Prostate gland (tissue), 2 donors: ENCODE measurements at regions of chr3 and their contacts with region 1.

Region 1: GRCh38 chr3:138329127-138329983 is at the start of gene NME9:
- DNase-seq: peak; percentile 86
- H3K4me3 ChIP-seq: peak within 1 kb of the TSS; percentile 45 to 56
- H3K27ac ChIP-seq: peak within 1 kb of the TSS; percentile 64 to 78
- H3K4me1 ChIP-seq: no peaks in the 10 kb centered on the region
- H3K27me3 ChIP-seq: no peaks in the 10 kb centered on the region
- CTCF ChIP-seq: peak in 3 of 4 experiments; percentile 42 to 57 (median 50)
- POLR2A ChIP-seq: peak; percentile 39
- total RNA-seq, gene NME9: 3.2 TPM in 1 of 2 donors, not detected in the other

Region 2: DNA sequence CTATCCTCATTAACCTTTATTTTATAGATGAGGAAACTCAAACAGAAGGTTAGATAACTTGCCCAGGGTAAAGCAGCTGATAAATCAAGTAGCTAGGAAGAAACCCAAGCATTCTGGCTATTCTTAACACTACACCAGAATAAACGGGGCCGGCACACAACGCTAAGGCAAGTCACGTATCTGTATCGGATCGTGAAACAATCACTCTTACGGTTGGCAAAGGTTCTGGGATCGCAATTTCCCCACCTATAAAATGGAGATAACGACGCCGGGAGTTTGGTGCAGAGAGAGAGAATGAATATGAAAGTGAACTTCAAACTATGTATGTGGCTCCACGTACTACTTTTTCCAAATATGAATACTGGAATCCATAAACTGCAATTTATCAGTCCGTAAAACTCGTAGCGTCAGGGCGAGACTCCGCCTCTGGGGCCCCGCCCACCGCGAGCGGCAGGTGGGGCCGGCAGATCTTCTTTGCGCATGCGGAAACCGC is 142.5 kb before region 1 on chr3:
- intact Hi-C with region 1: loop called (anchors 5 kb)
- DNase-seq: peak; percentile 88
- H3K4me3 ChIP-seq: peak overlapping the region; percentile 72 to 98
- H3K27ac ChIP-seq: peak overlapping the region; percentile 89 to 96
- H3K4me1 ChIP-seq: no peaks in the 10 kb centered on the region
- H3K27me3 ChIP-seq: no peaks in the 10 kb centered on the region
- CTCF ChIP-seq: no peak
- POLR2A ChIP-seq: no peak

Region 3: GRCh38 chr3:138424323-138424722 is 95.0 kb after region 1 on chr3:
- intact Hi-C with region 1: loop called (anchors 5 kb)
- DNase-seq: no peak
- H3K4me3 ChIP-seq: no peak overlapping the region
- H3K27ac ChIP-seq: no peak overlapping the region
- H3K4me1 ChIP-seq: no peaks in the 10 kb centered on the region
- H3K27me3 ChIP-seq: no peaks in the 10 kb centered on the region
- CTCF ChIP-seq: no peak
- POLR2A ChIP-seq: no peak